WTC11 (cell line): ENCODE measurements at regions of chr11 and their contacts with region 1.

Region 1: DNA sequence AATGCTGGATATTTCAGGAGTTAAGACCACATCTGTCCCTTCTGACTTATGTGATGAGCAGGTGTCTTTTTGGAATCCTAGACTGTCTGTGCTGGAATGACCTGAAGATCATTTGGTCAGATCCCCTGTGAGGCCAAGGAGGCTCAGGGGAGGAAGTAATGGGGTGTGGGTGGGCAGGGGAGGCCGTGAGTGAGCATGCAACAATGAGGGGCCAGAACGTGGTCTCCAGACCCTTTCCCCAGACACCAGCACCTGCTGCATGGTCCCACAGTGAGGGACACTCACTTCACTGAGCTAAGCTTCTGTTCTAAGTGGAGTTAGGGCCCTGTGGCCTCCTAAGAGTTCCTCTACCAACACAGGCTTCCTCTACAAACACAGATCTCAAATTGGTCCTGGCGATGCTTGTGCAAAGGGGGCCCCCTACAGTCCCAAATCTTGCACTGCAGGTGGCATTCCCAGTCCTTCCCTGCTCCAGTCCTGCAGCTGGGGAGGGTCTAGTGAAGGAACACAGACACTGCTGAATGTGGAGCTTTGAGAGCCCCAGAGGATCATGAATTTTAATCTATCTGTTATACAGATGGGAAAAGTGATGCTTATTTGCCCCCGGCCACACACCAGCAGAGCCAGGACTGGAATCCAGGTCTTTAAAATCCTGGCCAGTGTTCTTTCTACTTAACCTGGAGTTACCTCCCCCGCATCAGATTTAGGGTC is 7.4 kb downstream of the USP2 start:
- DNase-seq: peak; percentile 92
- ATAC-seq: peak; percentile 71
- H3K4me3 Mint-ChIP-seq: no peak overlapping the region
- H3K27ac Mint-ChIP-seq: no peak overlapping the region
- H3K4me1 Mint-ChIP-seq: peaks cover 74% of the 10 kb centered on the region
- H3K27me3 Mint-ChIP-seq: peaks cover 1% of the 10 kb centered on the region; the same call in 1 of the 2 replicates
- CTCF ChIP-seq: peak; percentile 79

Region 2: GRCh38 chr11:119323538-119324033 is 50.5 kb before region 1 on chr11:
- CTCF ChIA-PET with region 1: interaction called, 55 read pairs
- POLR2A ChIA-PET with region 1: no interaction called
- DNase-seq: peak; percentile 90
- ATAC-seq: peak; percentile 5
- H3K4me3 Mint-ChIP-seq: no peak overlapping the region; the same call in 1 of the 2 replicates
- H3K27ac Mint-ChIP-seq: no peak overlapping the region
- H3K4me1 Mint-ChIP-seq: peaks cover 32% of the 10 kb centered on the region
- H3K27me3 Mint-ChIP-seq: peaks cover 3% of the 10 kb centered on the region; the same call in 1 of the 2 replicates
- CTCF ChIP-seq: peak; percentile 86

Region 3: DNA sequence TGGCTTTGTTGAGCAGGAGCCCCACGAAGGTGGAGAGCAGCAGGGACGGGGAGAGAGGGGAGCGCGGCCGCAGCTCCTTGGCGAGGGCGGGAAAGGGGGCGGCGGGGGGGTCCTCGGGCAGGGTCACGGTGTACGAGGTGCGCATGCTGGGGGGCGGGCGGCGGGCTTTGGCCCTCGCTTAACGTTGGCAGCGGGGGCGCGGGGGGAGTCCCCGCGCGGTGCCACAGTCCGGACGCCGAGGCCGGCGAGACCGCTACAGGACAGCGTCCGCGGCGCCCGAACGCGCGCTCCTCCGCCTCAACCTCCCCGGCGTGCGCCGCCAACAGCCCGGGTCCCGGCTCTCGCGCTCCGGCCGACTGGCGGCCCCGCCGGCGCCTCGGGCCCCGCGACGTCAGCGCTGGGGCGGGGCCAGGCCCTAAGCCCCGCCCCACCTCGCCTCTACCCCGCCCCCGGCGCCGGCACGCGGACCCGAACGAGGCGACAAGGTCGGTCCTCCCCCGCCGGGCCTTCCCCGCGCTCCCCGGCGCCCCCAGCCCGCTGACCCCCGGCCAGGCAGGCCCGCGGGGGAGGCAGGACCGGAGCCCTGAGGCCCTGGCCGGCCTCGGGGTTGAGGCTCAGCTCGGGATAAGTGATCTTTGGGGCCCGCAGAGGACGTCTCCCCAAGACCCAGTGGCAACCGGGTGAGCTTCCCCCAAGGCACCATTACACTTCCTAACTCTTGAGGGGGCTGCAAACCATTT is 10.1 kb before region 1 on chr11:
- CTCF ChIA-PET with region 1: interaction called, 95 read pairs
- POLR2A ChIA-PET with region 1: interaction called, 4 read pairs
- DNase-seq: peak; percentile 68
- ATAC-seq: peak; percentile 72
- H3K4me3 Mint-ChIP-seq: peak overlapping the region; percentile 69
- H3K27ac Mint-ChIP-seq: no peak overlapping the region
- H3K4me1 Mint-ChIP-seq: peaks cover 50% of the 10 kb centered on the region
- H3K27me3 Mint-ChIP-seq: peaks cover 49% of the 10 kb centered on the region
- CTCF ChIP-seq: no peak

Region 4: GRCh38 chr11:119389611-119390254 is 15.7 kb after region 1 on chr11:
- CTCF ChIA-PET with region 1: interaction called, 20 read pairs
- POLR2A ChIA-PET with region 1: no interaction called
- DNase-seq: peak; percentile 79
- ATAC-seq: peak; percentile 98
- H3K4me3 Mint-ChIP-seq: no peak overlapping the region
- H3K27ac Mint-ChIP-seq: no peak overlapping the region
- H3K4me1 Mint-ChIP-seq: peaks cover under 1% of the 10 kb centered on the region
- H3K27me3 Mint-ChIP-seq: no peaks in the 10 kb centered on the region
- CTCF ChIP-seq: peak; percentile 33; the same call in 1 of the 2 replicates